ENCODE measurements at regions of chr6 and their contacts with region 1.

Region 1: DNA sequence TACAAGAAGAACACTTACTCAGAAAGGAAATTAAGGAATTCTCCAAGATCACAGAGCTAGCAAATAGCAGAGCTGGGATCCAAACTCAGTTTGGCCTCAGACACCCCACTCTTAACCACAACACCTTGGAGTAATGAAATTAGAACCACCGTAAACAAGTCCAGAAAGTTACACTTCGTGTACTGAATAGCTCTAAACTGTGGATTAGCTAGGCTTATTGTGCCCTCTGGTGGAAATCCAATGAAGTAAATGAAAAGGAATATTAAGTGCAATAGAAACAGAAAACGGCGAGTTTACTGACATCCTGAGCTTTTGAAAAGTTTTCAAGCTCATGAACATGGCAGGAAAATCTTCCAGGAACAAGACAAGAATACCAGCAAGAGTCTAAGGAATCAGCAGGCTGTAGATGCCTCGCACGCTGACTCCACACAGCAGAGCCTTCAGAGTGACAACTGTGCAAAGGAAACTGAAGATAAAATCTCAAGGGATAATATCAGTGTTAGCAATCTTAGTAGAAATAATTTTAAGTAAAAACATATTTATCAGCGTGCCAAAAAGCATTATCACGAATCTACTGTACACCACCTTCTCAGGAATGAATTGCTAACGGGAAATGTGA is 34.6 kb downstream of the FBXO5 start:
- DNase-seq: peak in 2 of 4 experiments; percentile 42 to 75
- ATAC-seq: peak; percentile 94
- H3K4me3 ChIP-seq: no peak overlapping the region
- H3K27ac ChIP-seq: no peak overlapping the region
- H3K4me1 ChIP-seq: no peaks in the 10 kb centered on the region
- H3K27me3 ChIP-seq: peaks cover 0 to 2% of the 10 kb centered on the region in 2 experiments; a peak in 1 of 5 replicates
- CTCF ChIP-seq: peak; percentile 65 to 87 (median 74); a peak in 5 of 6 replicates
- EP300 ChIP-seq: no peak
- POLR2A ChIP-seq: no peak
- RAD21 ChIP-seq: peak; percentile 91 to 96

Region 2: GRCh38 chr6:151675746-151676416 is 1272.4 kb before region 1 on chr6:
- CTCF ChIA-PET with region 1: interaction called, 4 read pairs
- POLR2A ChIA-PET with region 1: no interaction called
- in situ Hi-C with region 1: no loop called
- intact Hi-C with region 1: loop called (anchors 10 kb)
- DNase-seq: peak; percentile 67 to 85 (median 80)
- ATAC-seq: peak; percentile 93
- H3K4me3 ChIP-seq: no peak overlapping the region
- H3K27ac ChIP-seq: no peak overlapping the region
- H3K4me1 ChIP-seq: no peaks in the 10 kb centered on the region; a peak in 1 of 5 replicates
- H3K27me3 ChIP-seq: peaks cover 0 to 4% of the 10 kb centered on the region in 2 experiments; a peak in 2 of 5 replicates
- CTCF ChIP-seq: peak; percentile 86 to 97 (median 89)
- EP300 ChIP-seq: no peak
- POLR2A ChIP-seq: no peak
- RAD21 ChIP-seq: peak; percentile 76 to 80

Region 3: GRCh38 chr6:152206072-152206818 is 742.0 kb before region 1 on chr6:
- CTCF ChIA-PET with region 1: no interaction called
- POLR2A ChIA-PET with region 1: no interaction called
- in situ Hi-C with region 1: no loop called
- intact Hi-C with region 1: loop called (anchors 1 kb)
- DNase-seq: peak; percentile 14 to 57 (median 28)
- ATAC-seq: peak; percentile 87
- H3K4me3 ChIP-seq: no peak overlapping the region
- H3K27ac ChIP-seq: no peak overlapping the region
- H3K4me1 ChIP-seq: no peaks in the 10 kb centered on the region
- H3K27me3 ChIP-seq: no peaks in the 10 kb centered on the region
- CTCF ChIP-seq: peak; percentile 32 to 73 (median 58); a peak in 5 of 6 replicates
- EP300 ChIP-seq: no peak
- POLR2A ChIP-seq: no peak
- RAD21 ChIP-seq: peak in 1 of 2 experiments; percentile 39; a peak in 2 of 4 replicates

Region 4: GRCh38 chr6:152484806-152485205 is 463.5 kb before region 1 on chr6:
- CTCF ChIA-PET with region 1: no interaction called
- POLR2A ChIA-PET with region 1: no interaction called
- in situ Hi-C with region 1: no loop called
- intact Hi-C with region 1: loop called (anchors 5 kb)
- DNase-seq: no peak
- ATAC-seq: no peak
- H3K4me3 ChIP-seq: no peak overlapping the region
- H3K27ac ChIP-seq: no peak overlapping the region
- H3K4me1 ChIP-seq: no peaks in the 10 kb centered on the region
- H3K27me3 ChIP-seq: no peaks in the 10 kb centered on the region
- CTCF ChIP-seq: no peak
- EP300 ChIP-seq: no peak
- POLR2A ChIP-seq: no peak
- RAD21 ChIP-seq: no peak

Region 5: GRCh38 chr6:152748843-152749242 is 199.4 kb before region 1 on chr6:
- CTCF ChIA-PET with region 1: interaction called, 17 read pairs
- POLR2A ChIA-PET with region 1: no interaction called
- in situ Hi-C with region 1: loop called (anchors 10 kb)
- intact Hi-C with region 1: loop called (anchors 1 kb)
- DNase-seq: peak in 1 of 4 experiments; percentile 24
- ATAC-seq: no peak
- H3K4me3 ChIP-seq: no peak overlapping the region
- H3K27ac ChIP-seq: no peak overlapping the region
- H3K4me1 ChIP-seq: no peaks in the 10 kb centered on the region
- H3K27me3 ChIP-seq: no peaks in the 10 kb centered on the region
- CTCF ChIP-seq: peak in 1 of 3 experiments; percentile 56; a peak in 3 of 6 replicates
- EP300 ChIP-seq: no peak
- POLR2A ChIP-seq: no peak
- RAD21 ChIP-seq: peak; percentile 47 to 63

Region 6: DNA sequence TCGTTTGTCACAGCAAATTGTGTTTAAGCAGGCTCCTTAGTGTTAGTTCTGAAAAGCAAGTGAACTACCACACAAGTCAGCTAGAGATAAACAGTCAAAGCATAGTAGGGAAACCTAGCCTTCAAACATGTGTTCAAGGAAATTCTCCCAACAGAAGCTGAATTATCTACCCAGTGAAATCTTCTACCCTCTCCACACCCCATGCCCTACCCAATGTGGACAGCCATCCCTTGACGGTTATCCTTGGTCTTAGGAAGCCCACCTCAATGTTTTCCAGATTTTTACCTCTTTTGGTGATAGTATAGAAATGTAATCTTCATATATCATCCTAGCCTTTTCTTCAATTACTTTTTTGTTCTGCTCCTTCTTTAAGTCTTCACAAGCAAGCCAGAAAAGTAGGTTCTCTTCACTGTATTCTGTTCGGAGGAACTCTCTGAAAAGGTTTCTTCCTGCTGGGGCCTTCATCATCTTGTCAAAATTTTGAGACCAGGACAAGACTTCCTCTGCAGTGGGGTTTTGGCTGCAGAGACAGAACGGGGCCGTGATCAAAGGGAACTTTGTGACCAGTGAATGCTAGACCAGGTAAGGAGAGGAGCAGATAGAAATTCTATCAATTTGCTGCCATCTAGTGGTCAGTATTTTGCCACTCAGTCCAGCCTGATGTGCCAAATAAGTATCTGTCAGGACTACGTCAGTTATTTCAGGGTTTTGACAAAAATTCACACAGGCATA is 75.9 kb after region 1 on chr6:
- CTCF ChIA-PET with region 1: interaction called, 24 read pairs
- POLR2A ChIA-PET with region 1: no interaction called
- in situ Hi-C with region 1: no loop called
- intact Hi-C with region 1: no loop called
- DNase-seq: peak; percentile 65 to 80 (median 69)
- ATAC-seq: peak; percentile 99
- H3K4me3 ChIP-seq: no peak overlapping the region
- H3K27ac ChIP-seq: no peak overlapping the region
- H3K4me1 ChIP-seq: no peaks in the 10 kb centered on the region
- H3K27me3 ChIP-seq: peaks cover 0 to 7% of the 10 kb centered on the region in 2 experiments; a peak in 2 of 5 replicates
- CTCF ChIP-seq: peak; percentile 68 to 93 (median 80)
- EP300 ChIP-seq: no peak
- POLR2A ChIP-seq: no peak
- RAD21 ChIP-seq: peak; percentile 81 to 86

Measured in K562 (cell line).